Sciatic nerve (tissue), 2 donors: ENCODE measurements at regions of chr2 and their contacts with region 1.

Region 1: GRCh38 chr2:84888401-84889276 is 7.8 kb upstream of the TRABD2A start:
- DNase-seq: no peak
- ATAC-seq: peak; percentile 92

Region 2: DNA sequence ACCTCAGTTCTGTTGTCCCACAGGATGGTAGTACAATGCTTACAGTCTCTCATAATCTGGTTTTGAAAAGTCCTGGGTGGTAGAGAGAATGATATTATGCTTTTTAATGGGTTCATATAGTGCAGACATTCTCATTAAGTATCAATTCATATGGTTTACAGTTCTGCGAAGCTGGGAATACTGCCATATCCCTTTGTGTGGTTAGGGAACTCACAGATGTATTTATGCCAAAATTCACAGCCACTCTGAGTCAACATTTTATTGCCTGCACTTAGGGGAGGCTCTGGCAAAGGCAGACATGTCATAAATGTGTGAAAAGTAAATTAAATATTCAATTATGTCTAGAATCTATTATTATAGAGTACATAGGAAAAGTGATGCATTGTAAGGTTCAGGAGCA is 1237.7 kb before region 1 on chr2:
- intact Hi-C with region 1: loop called (anchors 5 kb)
- DNase-seq: no peak
- ATAC-seq: no peak

Region 3: GRCh38 chr2:84904717-84905174 is 16.1 kb after region 1 on chr2:
- intact Hi-C with region 1: no loop called
- DNase-seq: peak; percentile 84
- ATAC-seq: peak; percentile 83